ENCODE measurements at regions of chr4 and their contacts with region 1.

Region 1: GRCh38 chr4:73593631-73594241 is 26.5 kb downstream of the RASSF6 start:
- DNase-seq: no peak
- ATAC-seq: no peak
- H3K4me3 ChIP-seq: no peak overlapping the region
- H3K27ac ChIP-seq: no peak overlapping the region
- H3K4me1 ChIP-seq: peaks cover 23% of the 10 kb centered on the region
- H3K27me3 ChIP-seq: no peaks in the 10 kb centered on the region
- CTCF ChIP-seq: peak; percentile 43 to 49 (median 48); a peak in 5 of 6 replicates
- EP300 ChIP-seq: no peak
- POLR2A ChIP-seq: no peak
- RAD21 ChIP-seq: peak; percentile 59

Region 2: DNA sequence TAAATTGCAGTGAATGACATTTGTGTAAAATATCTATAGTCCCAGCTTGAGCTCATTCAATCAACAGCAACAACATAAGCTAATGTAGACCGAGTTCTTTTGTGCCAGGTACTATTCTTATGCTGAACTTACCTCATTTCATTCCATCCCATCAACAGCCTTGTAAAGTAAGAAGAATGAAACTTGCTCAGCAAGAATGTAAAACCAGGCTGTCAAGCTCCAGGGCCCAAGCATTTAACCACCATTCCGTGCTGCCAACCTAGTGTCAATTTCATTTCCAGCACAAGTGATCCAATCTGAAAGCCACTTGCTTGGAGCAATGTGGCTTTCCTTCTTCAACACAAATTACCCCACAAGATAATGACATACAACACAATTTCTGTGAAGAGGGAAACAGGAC is 10.1 kb before region 1 on chr4:
- CTCF ChIA-PET with region 1: interaction called, 4 read pairs
- POLR2A ChIA-PET with region 1: no interaction called
- RAD21 ChIA-PET with region 1: no interaction called
- SMC1A ChIA-PET with region 1: interaction called, 11 read pairs
- in situ Hi-C with region 1: no loop called
- intact Hi-C with region 1: no loop called
- DNase-seq: no peak
- ATAC-seq: no peak
- H3K4me3 ChIP-seq: no peak overlapping the region
- H3K27ac ChIP-seq: no peak overlapping the region
- H3K4me1 ChIP-seq: peaks cover 2% of the 10 kb centered on the region; the same call in 1 of the 2 replicates
- H3K27me3 ChIP-seq: no peaks in the 10 kb centered on the region
- CTCF ChIP-seq: no peak
- EP300 ChIP-seq: no peak
- POLR2A ChIP-seq: no peak
- RAD21 ChIP-seq: no peak

Region 3: GRCh38 chr4:73608689-73609594 is 15.2 kb after region 1 on chr4:
- CTCF ChIA-PET with region 1: interaction called, 29 read pairs
- POLR2A ChIA-PET with region 1: interaction called, 17 read pairs
- RAD21 ChIA-PET with region 1: interaction called, 22 read pairs
- SMC1A ChIA-PET with region 1: interaction called, 146 read pairs
- in situ Hi-C with region 1: no loop called
- intact Hi-C with region 1: loop called (anchors 2 kb)
- DNase-seq: no peak
- ATAC-seq: peak; percentile 25
- H3K4me3 ChIP-seq: no peak overlapping the region
- H3K27ac ChIP-seq: no peak overlapping the region
- H3K4me1 ChIP-seq: peaks cover 13% of the 10 kb centered on the region
- H3K27me3 ChIP-seq: no peaks in the 10 kb centered on the region
- CTCF ChIP-seq: no peak
- EP300 ChIP-seq: no peak
- POLR2A ChIP-seq: no peak
- RAD21 ChIP-seq: no peak

Region 4: DNA sequence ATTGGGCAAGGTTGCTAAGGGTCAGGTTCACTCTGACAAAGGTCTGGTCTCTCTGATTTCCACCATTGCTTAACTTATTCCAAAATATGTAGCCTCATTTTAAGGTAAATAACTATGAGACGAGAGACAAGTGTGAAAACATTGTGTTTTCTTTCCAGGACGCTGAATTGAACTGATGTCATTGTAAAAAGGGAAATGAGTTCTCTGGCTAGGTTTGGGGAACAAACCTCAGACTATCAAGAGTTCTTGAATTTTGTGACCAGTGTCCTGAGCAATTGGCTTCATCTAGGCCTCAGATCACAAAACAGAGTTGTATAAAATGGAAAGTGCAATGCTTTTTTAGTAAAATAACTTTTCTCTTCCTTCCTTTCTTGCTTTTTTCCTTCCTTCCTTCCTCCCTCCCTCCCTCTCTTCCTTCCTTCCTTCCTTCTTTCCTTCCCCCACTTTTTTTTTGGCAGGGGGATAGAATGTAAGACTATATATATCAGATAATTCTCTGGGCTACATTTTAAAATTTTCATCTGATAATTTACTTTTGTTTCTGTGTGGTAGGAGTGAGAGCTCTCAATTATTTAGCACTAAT is 115.8 kb after region 1 on chr4:
- CTCF ChIA-PET with region 1: no interaction called
- POLR2A ChIA-PET with region 1: no interaction called
- RAD21 ChIA-PET with region 1: no interaction called
- SMC1A ChIA-PET with region 1: interaction called, 3 read pairs
- in situ Hi-C with region 1: no loop called
- intact Hi-C with region 1: loop called (anchors 5 kb)
- DNase-seq: no peak
- ATAC-seq: no peak
- H3K4me3 ChIP-seq: no peak overlapping the region
- H3K27ac ChIP-seq: no peak overlapping the region
- H3K4me1 ChIP-seq: no peaks in the 10 kb centered on the region
- H3K27me3 ChIP-seq: no peaks in the 10 kb centered on the region; a peak in 1 of 4 replicates
- CTCF ChIP-seq: no peak
- EP300 ChIP-seq: no peak
- POLR2A ChIP-seq: no peak
- RAD21 ChIP-seq: no peak